ENCODE measurements at regions of chr3 and their contacts with region 1.

Region 1: DNA sequence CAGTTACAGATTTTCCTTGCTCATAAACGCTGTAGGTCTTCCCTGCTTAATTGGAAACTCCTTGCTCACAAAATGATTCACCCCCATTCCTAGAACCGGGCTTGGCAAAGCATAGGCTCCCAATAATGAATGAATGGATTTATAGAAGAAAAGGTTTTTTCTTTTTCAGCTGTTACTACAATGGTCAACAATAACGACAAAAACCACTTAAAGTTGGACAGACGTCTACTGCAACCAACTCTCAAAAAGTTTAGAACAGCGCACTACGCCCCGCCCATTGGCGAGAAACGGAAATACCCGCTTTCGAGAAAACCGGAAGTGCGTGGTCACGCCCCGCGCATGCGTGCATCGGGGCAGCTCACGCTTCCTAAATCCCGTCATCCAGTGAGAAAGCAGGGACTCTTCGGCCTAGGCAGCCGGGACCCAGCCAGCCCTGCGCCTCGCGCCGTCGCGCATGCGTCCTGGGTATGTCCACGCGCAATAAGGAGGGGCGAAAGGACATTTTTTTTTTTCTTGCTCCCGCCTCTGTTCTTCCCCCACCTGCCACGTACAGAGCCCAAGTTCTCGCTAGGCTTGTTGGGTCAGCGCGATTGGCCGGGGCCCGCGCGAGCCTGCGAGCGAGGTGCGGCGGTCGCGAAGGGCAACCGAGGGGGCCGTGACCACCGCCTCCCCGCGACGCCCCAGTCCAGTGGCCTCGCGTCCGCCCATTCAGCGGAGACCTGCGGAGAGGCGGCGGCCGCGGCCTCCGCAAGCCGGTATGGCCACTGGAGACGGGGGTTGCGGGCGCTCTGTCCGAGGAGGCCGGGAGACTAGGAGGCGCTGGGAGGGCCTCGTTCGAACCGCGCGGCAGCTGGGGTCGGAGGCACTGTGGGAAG is at the start of gene TFG:
- DNase-seq: peak; percentile 98
- H3K4me3 Mint-ChIP-seq: peak within 1 kb of the TSS; percentile 81
- H3K27ac Mint-ChIP-seq: peak within 1 kb of the TSS; percentile 95
- H3K4me1 Mint-ChIP-seq: peaks cover 40% of the 10 kb centered on the region
- H3K27me3 Mint-ChIP-seq: peaks cover 9% of the 10 kb centered on the region
- total RNA-seq, gene TFG: 55.5 to 60.3 TPM

Region 2: GRCh38 chr3:100260685-100261484 is 448.3 kb before region 1 on chr3 and contains the start of gene TBC1D23:
- CTCF ChIA-PET with region 1: no interaction called
- POLR2A ChIA-PET with region 1: no interaction called
- intact Hi-C with region 1: loop called (anchors 2 kb)
- DNase-seq: peak; percentile 99
- H3K4me3 Mint-ChIP-seq: peak within 1 kb of the TSS; percentile 92
- H3K27ac Mint-ChIP-seq: peak within 1 kb of the TSS; percentile 85
- H3K4me1 Mint-ChIP-seq: peaks cover 52% of the 10 kb centered on the region
- H3K27me3 Mint-ChIP-seq: no peaks in the 10 kb centered on the region
- total RNA-seq, gene TBC1D23: 17.8 to 22.7 TPM

Region 3: GRCh38 chr3:100400780-100401673 is 308.2 kb before region 1 on chr3 and contains the starts of genes LNP1 and TOMM70:
- CTCF ChIA-PET with region 1: interaction called, 5 read pairs
- POLR2A ChIA-PET with region 1: interaction called, 17 read pairs
- intact Hi-C with region 1: loop called (anchors 1 kb)
- DNase-seq: peak; percentile 97
- H3K4me3 Mint-ChIP-seq: peak within 1 kb of the TSS; percentile 92
- H3K27ac Mint-ChIP-seq: peak within 1 kb of the TSS; percentile 94
- H3K4me1 Mint-ChIP-seq: peaks cover 62% of the 10 kb centered on the region
- H3K27me3 Mint-ChIP-seq: no peaks in the 10 kb centered on the region
- total RNA-seq, gene LNP1: 1.9 to 2.3 TPM
- total RNA-seq, gene TOMM70: 44.9 to 47.1 TPM

Region 4: DNA sequence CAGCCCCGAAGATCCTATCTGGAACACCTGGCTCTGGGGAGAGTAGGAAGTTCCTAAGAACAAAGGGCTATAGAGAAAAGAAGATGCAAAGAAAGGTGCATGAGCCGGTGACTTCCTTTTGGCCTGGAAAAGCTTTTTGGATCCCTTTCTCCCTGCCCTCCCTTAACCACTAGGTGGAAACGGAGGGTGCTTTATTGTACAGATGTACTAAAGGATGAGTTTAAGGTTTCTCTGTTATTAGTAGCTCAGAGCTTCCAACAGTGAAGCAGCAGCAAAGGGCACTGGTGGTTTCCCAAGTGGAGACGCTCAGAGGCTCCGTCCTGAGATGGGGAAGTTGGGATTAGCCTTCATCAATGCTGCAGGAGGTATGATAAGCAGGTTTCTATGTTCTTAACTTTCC is 105.7 kb before region 1 on chr3:
- CTCF ChIA-PET with region 1: no interaction called
- POLR2A ChIA-PET with region 1: no interaction called
- intact Hi-C with region 1: loop called (anchors 1 kb)
- DNase-seq: no peak
- H3K4me3 Mint-ChIP-seq: peak overlapping the region; percentile 21
- H3K27ac Mint-ChIP-seq: no peak overlapping the region
- H3K4me1 Mint-ChIP-seq: peaks cover 17% of the 10 kb centered on the region
- H3K27me3 Mint-ChIP-seq: peaks cover 4% of the 10 kb centered on the region

Region 5: GRCh38 chr3:100665230-100665629 is 44.0 kb before region 1 on chr3:
- CTCF ChIA-PET with region 1: no interaction called
- POLR2A ChIA-PET with region 1: no interaction called
- intact Hi-C with region 1: loop called (anchors 1 kb)
- DNase-seq: peak; percentile 57
- H3K4me3 Mint-ChIP-seq: peak overlapping the region; percentile 21
- H3K27ac Mint-ChIP-seq: peak overlapping the region; percentile 45
- H3K4me1 Mint-ChIP-seq: peaks cover 21% of the 10 kb centered on the region
- H3K27me3 Mint-ChIP-seq: no peaks in the 10 kb centered on the region

Region 6: GRCh38 chr3:101381809-101382208 is 672.6 kb after region 1 on chr3:
- CTCF ChIA-PET with region 1: no interaction called
- POLR2A ChIA-PET with region 1: no interaction called
- intact Hi-C with region 1: loop called (anchors 2 kb)
- DNase-seq: no peak
- H3K4me3 Mint-ChIP-seq: no peak overlapping the region
- H3K27ac Mint-ChIP-seq: no peak overlapping the region
- H3K4me1 Mint-ChIP-seq: peaks cover 50% of the 10 kb centered on the region
- H3K27me3 Mint-ChIP-seq: no peaks in the 10 kb centered on the region

Measured in activated CD4-positive, alpha-beta memory T cell treated with anti-CD3 and anti-CD28 coated beads for 36 hours (primary cell).